Lower leg skin (tissue), 4 donors: ENCODE measurements at regions of chr3 and their contacts with region 1.

Region 1: DNA sequence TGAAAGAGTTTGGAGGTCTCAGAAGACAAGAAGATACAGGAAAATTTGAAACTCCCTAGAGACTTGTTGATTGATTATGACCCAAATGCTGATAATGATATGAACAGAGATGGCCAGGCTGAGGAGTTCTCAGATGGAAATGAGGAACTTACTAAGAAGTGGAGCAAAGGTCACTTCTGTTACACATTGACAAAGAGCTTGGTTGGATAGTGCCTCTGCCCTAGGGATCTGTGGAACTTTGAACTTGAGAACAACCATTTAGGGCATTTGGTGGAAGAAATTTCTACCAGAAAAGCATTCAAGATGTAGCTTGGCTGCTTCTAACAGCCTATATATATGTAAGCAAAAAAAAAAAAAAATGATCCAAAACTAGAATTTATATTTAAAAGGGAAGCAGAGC is 48.9 kb upstream of the NAALADL2 start:
- DNase-seq: no peak
- H3K4me3 ChIP-seq: no peak overlapping the region
- CTCF ChIP-seq: no peak
- POLR2A ChIP-seq: no peak

Region 2: DNA sequence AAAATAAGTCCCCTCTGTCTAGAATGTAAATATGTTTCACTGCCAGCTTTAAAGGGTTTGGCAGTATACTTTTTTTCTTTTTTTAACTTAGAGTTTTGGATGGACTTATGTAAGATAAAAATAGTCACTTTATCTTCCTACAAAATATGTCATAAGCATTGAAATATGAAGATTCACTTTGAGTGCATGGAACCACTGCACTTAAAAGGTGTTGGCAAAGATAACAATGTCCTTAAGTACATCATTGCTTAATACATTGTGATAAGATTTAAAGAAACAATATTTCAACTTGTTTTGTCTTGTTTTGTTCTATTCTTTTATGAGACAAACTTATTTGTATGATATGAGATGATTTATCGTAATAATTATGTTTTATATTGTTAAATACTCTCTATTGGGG is 17.4 kb before region 1 on chr3:
- intact Hi-C with region 1: loop called (anchors 1 kb)
- DNase-seq: no peak
- H3K4me3 ChIP-seq: no peak overlapping the region
- CTCF ChIP-seq: no peak
- POLR2A ChIP-seq: no peak

Region 3: DNA sequence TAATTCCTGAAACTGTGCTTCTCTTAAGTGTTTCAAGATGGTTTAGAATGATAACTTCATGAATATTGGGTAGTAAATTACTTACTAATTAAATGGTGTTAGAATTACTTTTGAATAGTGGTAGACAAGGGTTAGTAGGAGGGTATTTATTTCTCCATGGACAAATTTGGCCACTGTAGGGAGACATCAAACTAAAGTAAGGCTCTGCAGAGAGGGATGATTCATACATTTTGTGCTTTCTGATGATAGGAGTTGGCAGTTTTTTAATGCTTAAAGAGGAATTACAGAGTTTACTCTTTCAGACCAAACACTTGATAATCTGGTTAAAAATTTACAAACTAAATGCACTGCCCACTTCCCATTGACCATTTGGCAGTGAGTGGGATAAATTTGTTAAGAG is 176.4 kb after region 1 on chr3:
- intact Hi-C with region 1: no loop called
- DNase-seq: no peak
- H3K4me3 ChIP-seq: no peak overlapping the region
- CTCF ChIP-seq: no peak
- POLR2A ChIP-seq: no peak